ENCODE measurements at regions of chr3 and their contacts with region 1.

Region 1: DNA sequence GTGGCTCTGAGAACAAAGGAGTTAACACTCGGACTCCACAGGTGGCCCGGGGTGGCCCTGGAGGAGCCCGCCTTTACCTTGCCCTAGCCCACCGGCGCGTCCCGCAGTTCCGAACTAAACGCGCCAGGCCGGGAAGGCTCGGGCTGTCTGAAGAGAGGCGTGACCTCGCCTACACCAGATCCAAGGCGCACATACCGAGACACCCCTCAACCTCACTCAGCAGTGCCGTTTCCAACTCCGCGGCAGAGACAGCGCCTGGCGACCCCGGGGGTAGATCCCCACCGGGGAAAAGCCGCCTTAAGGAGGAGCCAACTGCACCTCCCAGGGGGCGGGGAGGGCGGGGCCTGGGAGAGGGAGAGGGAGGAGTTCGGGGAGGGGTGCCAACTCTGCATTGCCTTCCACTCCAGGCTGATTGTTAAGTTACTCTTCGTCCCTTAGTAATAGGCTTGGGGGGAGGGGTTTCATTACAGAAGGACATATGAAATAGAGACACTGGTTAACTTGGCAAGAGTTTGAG is at the start of gene DLG1:
- DNase-seq: peak; percentile 92
- ATAC-seq: peak; percentile 84 to 94
- total RNA-seq, gene DLG1: 44.1 to 59.0 TPM

Region 2: GRCh38 chr3:197343656-197344408 is 45.4 kb after region 1 on chr3:
- intact Hi-C with region 1: loop called in 1 of 2 experiments (anchors 2 kb)
- DNase-seq: no peak
- ATAC-seq: peak; percentile 39 to 42